ENCODE measurements at regions of chr6 and their contacts with region 1.

Region 1: DNA sequence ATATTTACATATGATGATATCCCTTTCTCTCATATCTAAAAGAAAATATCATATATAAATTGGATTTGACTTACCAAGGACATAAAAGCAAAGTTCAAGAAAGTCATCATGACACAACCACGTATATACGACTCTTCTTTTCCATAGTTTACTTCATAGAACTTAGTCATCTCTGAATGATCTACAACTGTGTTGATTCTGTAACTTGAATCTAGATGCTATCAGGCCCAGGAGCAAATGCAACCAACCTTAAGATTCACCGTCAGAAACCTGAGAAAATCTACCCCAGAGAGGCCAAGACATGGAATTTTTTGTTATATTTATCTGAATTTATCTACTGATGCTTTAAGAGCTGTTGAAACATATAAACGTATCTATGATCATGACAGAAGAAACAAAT is 165.6 kb downstream of the PDE10A start:
- DNase-seq: peak; percentile 27
- ATAC-seq: no peak
- H3K4me3 ChIP-seq: no peak overlapping the region
- H3K27ac ChIP-seq: no peak overlapping the region
- H3K4me1 ChIP-seq: no peaks in the 10 kb centered on the region
- H3K27me3 ChIP-seq: no peaks in the 10 kb centered on the region
- CTCF ChIP-seq: no peak

Region 2: DNA sequence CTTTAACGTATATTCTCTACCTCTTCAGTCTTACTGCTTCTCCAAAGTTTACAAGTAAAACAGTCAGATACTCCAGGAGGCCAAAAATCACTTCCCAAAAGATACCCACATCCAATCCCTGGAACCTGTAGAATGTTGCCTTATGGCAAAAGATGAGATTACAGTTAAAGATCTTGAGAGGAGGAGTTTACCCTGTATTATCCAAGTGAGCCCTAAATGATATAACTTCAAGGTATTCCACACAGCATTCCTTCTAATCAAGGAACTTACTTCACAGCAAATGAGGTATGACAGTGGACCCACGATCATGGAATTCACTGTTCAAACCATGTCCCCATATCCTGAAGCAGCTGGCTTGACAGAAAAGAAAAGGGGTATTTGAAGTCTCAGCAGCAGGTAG is 85.8 kb after region 1 on chr6:
- CTCF ChIA-PET with region 1: interaction called, 10 read pairs
- POLR2A ChIA-PET with region 1: no interaction called
- in situ Hi-C with region 1: no loop called
- intact Hi-C with region 1: no loop called
- DNase-seq: no peak
- ATAC-seq: peak; percentile 40; the same call in 1 of the 2 replicates
- H3K4me3 ChIP-seq: no peak overlapping the region
- H3K27ac ChIP-seq: no peak overlapping the region
- H3K4me1 ChIP-seq: peaks cover 15% of the 10 kb centered on the region; the same call in 1 of the 2 replicates
- H3K27me3 ChIP-seq: no peaks in the 10 kb centered on the region
- CTCF ChIP-seq: no peak